MCF 10A (cell line): ENCODE measurements at regions of chr7 and their contacts with region 1.

Region 1: DNA sequence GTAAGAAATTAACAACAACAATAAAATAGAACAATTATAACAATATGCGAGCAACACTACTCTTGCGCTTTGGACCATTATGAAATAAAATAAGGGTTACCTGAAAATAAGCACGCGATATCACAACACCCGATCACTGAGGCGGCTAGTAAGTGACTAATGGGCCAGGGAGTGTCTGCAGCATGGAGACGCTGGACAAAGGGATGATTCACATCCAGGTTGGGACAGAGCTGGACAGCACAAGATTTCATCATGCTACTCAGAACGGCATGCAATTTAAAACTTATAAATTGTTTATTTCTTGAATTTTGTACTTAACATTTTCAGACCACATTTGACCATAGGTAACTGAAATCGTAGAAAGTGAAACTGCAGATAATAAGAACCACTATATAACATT is 15.6 kb downstream of the HIBADH start:
- DNase-seq: peak; percentile 95
- H3K4me3 Mint-ChIP-seq: peak overlapping the region; percentile 59
- H3K27ac Mint-ChIP-seq: peak overlapping the region; percentile 91
- H3K4me1 Mint-ChIP-seq: peaks cover 44% of the 10 kb centered on the region
- H3K27me3 Mint-ChIP-seq: no peaks in the 10 kb centered on the region
- CTCF ChIP-seq: no peak

Region 2: DNA sequence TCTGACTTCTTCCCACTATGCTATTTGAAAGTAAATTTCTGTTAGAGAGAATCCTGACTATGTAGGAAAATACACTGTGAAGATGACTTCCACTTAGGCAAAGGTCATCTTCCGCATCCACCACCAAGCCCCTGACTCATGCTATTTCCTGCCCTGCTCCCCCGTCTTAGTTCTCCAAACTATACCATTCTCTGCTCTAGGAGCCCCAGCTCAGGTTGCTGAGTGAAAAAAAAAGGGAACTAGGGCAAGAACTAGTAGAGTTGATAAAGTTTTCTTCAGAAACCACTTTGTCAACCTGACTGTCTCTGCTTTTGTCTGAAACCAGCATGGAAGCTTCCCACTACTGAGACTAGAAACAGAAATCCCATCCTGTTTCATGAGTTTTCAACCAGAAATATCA is 307.6 kb before region 1 on chr7:
- CTCF ChIA-PET with region 1: no interaction called
- POLR2A ChIA-PET with region 1: no interaction called
- intact Hi-C with region 1: no loop called
- DNase-seq: no peak
- H3K4me3 Mint-ChIP-seq: no peak overlapping the region
- H3K27ac Mint-ChIP-seq: no peak overlapping the region
- H3K4me1 Mint-ChIP-seq: no peaks in the 10 kb centered on the region
- H3K27me3 Mint-ChIP-seq: no peaks in the 10 kb centered on the region
- CTCF ChIP-seq: no peak

Region 3: GRCh38 chr7:27605689-27606269 is 41.3 kb before region 1 on chr7:
- CTCF ChIA-PET with region 1: interaction called, 7 read pairs
- POLR2A ChIA-PET with region 1: interaction called, 17 read pairs
- intact Hi-C with region 1: no loop called
- DNase-seq: peak; percentile 38
- H3K4me3 Mint-ChIP-seq: no peak overlapping the region
- H3K27ac Mint-ChIP-seq: no peak overlapping the region
- H3K4me1 Mint-ChIP-seq: peaks cover 13% of the 10 kb centered on the region
- H3K27me3 Mint-ChIP-seq: no peaks in the 10 kb centered on the region
- CTCF ChIP-seq: peak; percentile 27

Region 4: DNA sequence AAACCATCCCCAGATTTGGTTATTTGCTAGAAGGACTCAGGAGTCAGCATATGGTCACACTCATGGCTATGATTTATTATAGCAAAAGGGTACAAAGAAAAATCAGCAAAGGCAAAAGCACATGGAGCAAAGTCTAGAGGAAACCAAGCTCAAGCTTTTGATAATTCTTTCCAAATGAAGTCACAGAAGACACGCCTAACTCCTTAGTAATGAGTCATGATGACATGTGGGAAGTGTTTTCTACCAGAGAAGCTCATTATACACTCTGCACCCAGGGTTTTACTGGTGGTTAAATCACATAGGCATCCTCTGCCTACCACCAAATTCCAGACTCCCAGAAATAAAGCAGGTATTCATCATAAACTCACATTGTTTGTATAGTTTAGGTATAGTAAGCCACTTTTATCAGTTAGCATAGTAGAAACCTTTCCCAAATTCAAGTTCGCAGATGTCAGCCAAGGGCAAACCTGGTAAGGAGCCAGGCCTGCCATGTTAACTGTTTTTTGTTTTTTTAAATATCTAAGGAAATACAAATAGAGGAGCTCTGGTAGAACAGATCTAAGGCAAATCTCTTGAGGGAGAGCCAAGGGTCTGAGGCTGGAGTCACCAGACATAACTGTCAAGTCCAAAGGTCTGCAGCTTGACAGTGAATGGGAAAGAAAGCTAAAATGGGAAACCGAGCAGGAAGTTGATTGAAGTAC is 31.0 kb after region 1 on chr7:
- CTCF ChIA-PET with region 1: no interaction called
- POLR2A ChIA-PET with region 1: interaction called, 9 read pairs
- intact Hi-C with region 1: loop called (anchors 1 kb)
- DNase-seq: peak; percentile 78
- H3K4me3 Mint-ChIP-seq: peak overlapping the region; percentile 26
- H3K27ac Mint-ChIP-seq: peak overlapping the region; percentile 98
- H3K4me1 Mint-ChIP-seq: peaks cover 12% of the 10 kb centered on the region
- H3K27me3 Mint-ChIP-seq: no peaks in the 10 kb centered on the region
- CTCF ChIP-seq: no peak

Region 5: GRCh38 chr7:27745064-27745583 is 98.1 kb after region 1 on chr7:
- CTCF ChIA-PET with region 1: interaction called, 3 read pairs
- POLR2A ChIA-PET with region 1: interaction called, 94 read pairs
- intact Hi-C with region 1: no loop called
- DNase-seq: peak; percentile 62
- H3K4me3 Mint-ChIP-seq: no peak overlapping the region
- H3K27ac Mint-ChIP-seq: peak overlapping the region; percentile 77
- H3K4me1 Mint-ChIP-seq: peaks cover 32% of the 10 kb centered on the region
- H3K27me3 Mint-ChIP-seq: no peaks in the 10 kb centered on the region
- CTCF ChIP-seq: peak; percentile 63

Region 6: GRCh38 chr7:28245123-28245878 is 598.2 kb after region 1 on chr7:
- CTCF ChIA-PET with region 1: no interaction called
- POLR2A ChIA-PET with region 1: no interaction called
- intact Hi-C with region 1: no loop called
- DNase-seq: no peak
- H3K4me3 Mint-ChIP-seq: no peak overlapping the region
- H3K27ac Mint-ChIP-seq: no peak overlapping the region
- H3K4me1 Mint-ChIP-seq: no peaks in the 10 kb centered on the region
- H3K27me3 Mint-ChIP-seq: no peaks in the 10 kb centered on the region
- CTCF ChIP-seq: no peak